ENCODE measurements at regions of chr11 and their contacts with region 1.

Region 1: DNA sequence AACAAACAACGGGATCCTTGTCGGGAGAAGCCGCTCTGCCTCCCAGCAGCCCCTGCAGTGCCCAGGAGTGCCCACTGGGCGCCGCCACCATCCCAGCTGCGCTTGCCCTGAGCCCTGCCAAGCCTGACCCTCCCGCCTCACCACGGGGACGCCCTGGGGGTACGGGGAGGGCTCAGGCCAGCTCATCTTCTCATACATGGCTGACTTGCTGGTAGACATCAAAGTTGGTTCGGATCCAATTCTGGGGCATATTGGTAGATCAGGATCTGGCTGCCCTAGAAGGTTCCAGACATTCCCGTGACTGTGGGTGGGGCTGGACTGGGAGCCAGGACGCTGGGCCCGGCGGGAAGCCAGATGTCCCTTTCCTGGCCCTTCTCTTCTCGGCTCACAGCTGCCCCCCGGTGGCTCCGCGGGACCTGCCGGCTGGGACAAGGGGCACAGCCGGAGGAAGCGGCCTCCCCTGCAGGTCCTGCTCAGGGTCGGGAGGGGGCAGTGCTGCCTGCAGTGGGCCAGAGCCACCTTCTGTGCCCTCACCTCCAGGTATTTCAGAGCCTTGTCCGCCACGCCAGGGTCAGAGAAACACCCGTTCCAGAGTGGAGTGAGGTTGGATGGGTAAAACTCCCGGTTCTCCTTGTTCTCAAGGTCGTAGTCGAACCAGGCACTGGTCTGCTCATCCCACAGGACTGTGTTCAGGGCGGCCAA is 10.6 kb upstream of the TREH start:
- DNase-seq: peak; percentile 43
- H3K4me3 ChIP-seq: peak overlapping the region; percentile 51
- H3K27ac ChIP-seq: no peak overlapping the region
- H3K27me3 ChIP-seq: peaks cover 3% of the 10 kb centered on the region
- CTCF ChIP-seq: peak; percentile 76

Region 2: DNA sequence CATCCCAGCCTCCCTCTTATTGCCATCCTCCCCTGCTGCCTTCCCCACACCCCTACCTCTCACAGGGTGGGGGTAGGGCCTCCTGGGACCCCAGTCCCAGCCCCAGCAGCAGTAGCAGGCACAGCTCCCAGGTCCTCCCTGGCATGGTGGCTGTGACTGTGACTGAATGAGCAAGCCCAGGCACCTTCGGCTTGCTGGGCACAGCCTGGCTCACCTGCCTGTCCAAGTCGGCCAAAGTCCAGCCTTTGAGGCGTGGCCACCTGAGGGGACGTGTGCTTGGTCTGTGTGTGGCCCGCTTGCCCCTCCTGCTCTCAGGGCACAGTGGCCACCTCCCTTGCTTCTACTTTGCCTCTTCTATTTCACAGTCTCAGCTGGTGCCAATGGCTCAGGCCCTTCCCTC is 10.5 kb before region 1 on chr11 and contains the start of gene TREH:
- CTCF ChIA-PET with region 1: interaction called, 17 read pairs
- POLR2A ChIA-PET with region 1: no interaction called
- DNase-seq: no peak
- H3K4me3 ChIP-seq: no peak within 1 kb of the TSS
- H3K27ac ChIP-seq: no peak within 1 kb of the TSS
- H3K27me3 ChIP-seq: peaks cover 7% of the 10 kb centered on the region
- CTCF ChIP-seq: no peak
- polyA plus RNA-seq, gene TREH: not detected in 2 replicates

Region 3: GRCh38 chr11:118791111-118791965 is 101.3 kb after region 1 on chr11 and contains the start of gene DDX6:
- CTCF ChIA-PET with region 1: interaction called, 19 read pairs
- POLR2A ChIA-PET with region 1: no interaction called
- DNase-seq: peak; percentile 58
- H3K4me3 ChIP-seq: peak within 1 kb of the TSS; percentile 91
- H3K27ac ChIP-seq: peak within 1 kb of the TSS; percentile 97
- H3K27me3 ChIP-seq: no peaks in the 10 kb centered on the region
- CTCF ChIP-seq: peak; percentile 39
- polyA plus RNA-seq, gene DDX6: 68.8 and 81.8 TPM in 2 replicates

Region 4: GRCh38 chr11:118948000-118948399 is 258.0 kb after region 1 on chr11:
- CTCF ChIA-PET with region 1: interaction called, 57 read pairs
- POLR2A ChIA-PET with region 1: no interaction called
- DNase-seq: no peak
- H3K4me3 ChIP-seq: no peak overlapping the region
- H3K27ac ChIP-seq: no peak overlapping the region
- H3K27me3 ChIP-seq: peaks cover 33% of the 10 kb centered on the region
- CTCF ChIP-seq: no peak

Region 5: GRCh38 chr11:120400564-120401364 is 1710.8 kb after region 1 on chr11:
- CTCF ChIA-PET with region 1: no interaction called
- POLR2A ChIA-PET with region 1: interaction called, 16 read pairs
- DNase-seq: peak; percentile 94
- H3K4me3 ChIP-seq: peak overlapping the region; percentile 47
- H3K27ac ChIP-seq: no peak overlapping the region
- H3K27me3 ChIP-seq: no peaks in the 10 kb centered on the region
- CTCF ChIP-seq: no peak

Measured in AG04450 (cell line).